CD8-positive, alpha-beta T cell (primary cell): ENCODE measurements at regions of chr14 and their contacts with region 1.

Region 1: GRCh38 chr14:86257973-86258372 is 728.0 kb downstream of the FLRT2 start:
- DNase-seq: no peak
- ATAC-seq: no peak
- H3K4me3 ChIP-seq: no peak overlapping the region
- H3K4me3 Mint-ChIP-seq: no peak overlapping the region
- H3K27ac ChIP-seq: no peak overlapping the region
- H3K27ac Mint-ChIP-seq: no peak overlapping the region
- H3K4me1 ChIP-seq: no peaks in the 10 kb centered on the region
- H3K4me1 Mint-ChIP-seq: no peaks in the 10 kb centered on the region
- H3K27me3 ChIP-seq: no peaks in the 10 kb centered on the region
- H3K27me3 Mint-ChIP-seq: no peaks in the 10 kb centered on the region
- CTCF ChIP-seq: no peak

Region 2: DNA sequence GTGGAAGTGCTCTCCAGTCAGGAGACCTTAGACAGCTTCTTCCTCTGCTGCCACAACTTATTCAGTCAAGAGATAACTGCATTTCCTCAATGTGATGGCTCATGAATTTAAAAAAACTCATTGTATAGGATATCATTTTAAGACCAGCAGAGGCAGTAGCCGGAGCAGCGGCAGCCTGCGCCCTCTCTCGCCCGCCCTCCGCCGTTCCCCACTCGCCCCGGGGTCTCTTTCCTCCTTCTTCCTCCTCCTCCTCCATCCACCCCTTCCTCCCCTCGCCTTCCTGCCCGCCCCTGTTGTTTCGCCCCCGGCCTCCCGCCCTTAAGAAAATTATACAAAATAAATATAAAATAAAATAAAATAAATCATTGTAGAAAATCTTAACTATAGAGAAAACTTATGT is 40.5 kb before region 1 on chr14:
- CTCF ChIA-PET with region 1: no interaction called
- POLR2A ChIA-PET with region 1: no interaction called
- intact Hi-C with region 1: loop called in 1 of 2 experiments (anchors 1 kb)
- DNase-seq: no peak
- ATAC-seq: no peak
- H3K4me3 ChIP-seq: no peak overlapping the region
- H3K4me3 Mint-ChIP-seq: no peak overlapping the region
- H3K27ac ChIP-seq: no peak overlapping the region
- H3K27ac Mint-ChIP-seq: no peak overlapping the region
- H3K4me1 ChIP-seq: no peaks in the 10 kb centered on the region
- H3K4me1 Mint-ChIP-seq: no peaks in the 10 kb centered on the region
- H3K27me3 ChIP-seq: no peaks in the 10 kb centered on the region
- H3K27me3 Mint-ChIP-seq: no peaks in the 10 kb centered on the region
- CTCF ChIP-seq: no peak

Region 3: DNA sequence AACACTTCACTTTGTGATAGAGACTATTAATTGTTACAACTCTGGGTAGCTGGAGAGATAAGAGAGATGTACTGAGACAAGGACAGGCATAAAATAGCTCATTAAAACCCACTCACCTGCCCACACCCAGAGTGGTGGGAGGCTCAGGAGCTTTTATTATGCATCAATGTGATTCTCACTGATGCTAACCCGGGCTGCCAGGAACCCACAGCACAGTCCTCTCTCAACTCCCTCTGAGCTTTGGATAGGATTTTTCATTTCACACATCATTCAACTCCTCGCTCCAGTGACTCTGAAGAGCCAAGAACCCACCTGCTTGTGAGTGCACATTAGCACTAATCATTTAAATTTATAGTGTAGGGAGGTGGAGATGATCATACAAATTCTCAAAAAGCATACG is 99.9 kb after region 1 on chr14:
- CTCF ChIA-PET with region 1: no interaction called
- POLR2A ChIA-PET with region 1: no interaction called
- intact Hi-C with region 1: no loop called
- DNase-seq: no peak
- ATAC-seq: no peak
- H3K4me3 ChIP-seq: no peak overlapping the region
- H3K4me3 Mint-ChIP-seq: no peak overlapping the region
- H3K27ac ChIP-seq: no peak overlapping the region
- H3K27ac Mint-ChIP-seq: no peak overlapping the region
- H3K4me1 ChIP-seq: no peaks in the 10 kb centered on the region
- H3K4me1 Mint-ChIP-seq: no peaks in the 10 kb centered on the region
- H3K27me3 ChIP-seq: no peaks in the 10 kb centered on the region
- H3K27me3 Mint-ChIP-seq: peaks cover 2% of the 10 kb centered on the region
- CTCF ChIP-seq: no peak